HEK293 (cell line): ENCODE measurements at regions of chr3 and their contacts with region 1.

Region 1: GRCh38 chr3:14525685-14526631 is 14.2 kb downstream of the GRIP2 start:
- H3K4me3 ChIP-seq: no peak overlapping the region
- H3K27ac ChIP-seq: no peak overlapping the region
- H3K4me1 ChIP-seq: no peaks in the 10 kb centered on the region
- CTCF ChIP-seq: no peak

Region 2: DNA sequence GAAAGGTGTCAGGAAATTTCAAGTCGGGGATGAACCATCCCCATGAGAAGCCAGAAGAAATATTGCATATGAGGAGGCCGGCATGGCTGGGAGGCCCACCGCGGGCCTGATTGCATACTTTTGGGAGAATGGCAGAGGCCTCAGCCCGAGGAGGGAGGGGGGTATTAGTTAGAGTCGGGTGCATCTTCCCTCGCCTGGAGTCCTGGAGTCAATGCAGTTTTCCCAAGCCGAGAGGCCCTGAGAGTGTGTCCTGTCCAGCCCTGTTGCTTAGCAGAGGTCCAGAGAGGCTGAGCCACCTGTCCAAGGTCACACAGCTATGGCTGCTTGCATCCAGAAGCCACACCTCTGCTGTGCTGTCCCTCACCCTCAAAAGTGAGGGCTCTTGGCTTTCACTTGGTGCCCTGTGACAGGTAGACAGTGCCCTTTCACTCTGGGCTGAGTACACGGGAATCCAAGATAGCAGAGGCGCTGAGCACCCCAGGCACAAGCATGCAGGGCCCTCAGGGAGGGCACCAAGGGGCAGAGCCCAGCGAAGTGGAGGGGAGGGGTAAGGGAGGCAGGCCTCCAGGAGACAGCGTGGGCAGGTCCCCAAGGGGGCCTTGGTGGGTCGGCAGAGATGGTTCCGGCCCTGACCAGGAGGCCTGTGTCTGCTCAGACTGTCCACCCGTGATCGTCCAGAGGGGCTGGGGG is 34.3 kb before region 1 on chr3:
- CTCF ChIA-PET with region 1: no interaction called
- POLR2A ChIA-PET with region 1: no interaction called
- H3K4me3 ChIP-seq: no peak overlapping the region
- H3K27ac ChIP-seq: no peak overlapping the region
- H3K4me1 ChIP-seq: no peaks in the 10 kb centered on the region
- CTCF ChIP-seq: no peak

Region 3: GRCh38 chr3:14508961-14509795 is 16.8 kb before region 1 on chr3:
- CTCF ChIA-PET with region 1: interaction called, 26 read pairs
- POLR2A ChIA-PET with region 1: no interaction called
- H3K4me3 ChIP-seq: no peak overlapping the region
- H3K27ac ChIP-seq: no peak overlapping the region
- H3K4me1 ChIP-seq: no peaks in the 10 kb centered on the region
- CTCF ChIP-seq: peak; percentile 79

Region 4: DNA sequence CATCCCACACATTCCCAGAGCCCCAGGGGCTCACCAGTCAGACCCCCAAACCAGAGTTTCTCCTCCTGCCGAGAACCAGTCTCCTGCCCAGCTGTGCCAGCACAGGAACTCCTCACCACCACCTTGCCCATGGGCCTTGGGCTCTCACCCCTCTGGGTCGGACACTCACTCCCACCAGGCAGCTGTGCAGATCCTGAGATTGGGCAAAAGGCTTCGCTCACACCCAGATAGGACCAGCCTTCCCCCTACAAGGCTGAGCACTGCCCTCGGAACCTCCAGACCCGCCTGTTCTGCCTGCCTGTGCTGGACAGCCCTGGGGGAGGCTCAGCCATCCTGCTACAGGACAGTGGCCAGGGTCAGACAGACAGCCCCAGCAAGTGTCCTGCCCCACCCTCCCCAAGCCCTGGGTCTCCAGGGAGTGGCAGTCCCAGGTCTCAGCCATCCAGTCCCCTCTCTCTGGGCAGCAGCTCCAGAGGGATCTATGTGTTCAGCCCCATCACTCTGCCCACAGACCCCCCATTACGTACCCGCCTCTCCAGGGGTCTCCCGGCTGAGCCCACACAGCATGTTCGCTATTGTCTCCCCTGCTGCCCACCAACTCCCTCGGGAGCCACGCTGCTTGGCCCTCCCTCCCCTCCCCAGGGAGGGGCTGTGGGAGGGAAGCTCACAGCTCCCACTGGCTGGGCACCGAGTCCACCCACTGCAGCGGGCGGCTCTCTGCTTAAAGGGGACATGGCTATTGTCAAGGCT is 14.0 kb after region 1 on chr3 and contains the start of gene GRIP2:
- CTCF ChIA-PET with region 1: no interaction called
- POLR2A ChIA-PET with region 1: no interaction called
- H3K4me3 ChIP-seq: no peak within 1 kb of the TSS
- H3K27ac ChIP-seq: no peak within 1 kb of the TSS
- H3K4me1 ChIP-seq: no peaks in the 10 kb centered on the region
- CTCF ChIP-seq: no peak